Right cardiac atrium (tissue), 5 donors: ENCODE measurements at regions of chr1 and their contacts with region 1.

Region 1: GRCh38 chr1:114100148-114100547 is 53.5 kb downstream of the SYT6 start:
- DNase-seq: no peak
- ATAC-seq: no peak
- H3K4me3 ChIP-seq: no peak overlapping the region
- H3K27ac ChIP-seq: no peak overlapping the region
- H3K4me1 ChIP-seq: no peaks in the 10 kb centered on the region
- H3K27me3 ChIP-seq: no peaks in the 10 kb centered on the region

Region 2: GRCh38 chr1:114124644-114125043 is 24.5 kb after region 1 on chr1:
- intact Hi-C with region 1: loop called in 1 of 4 experiments (anchors 2 kb)
- DNase-seq: no peak
- ATAC-seq: no peak
- H3K4me3 ChIP-seq: no peak overlapping the region
- H3K27ac ChIP-seq: no peak overlapping the region
- H3K4me1 ChIP-seq: no peaks in the 10 kb centered on the region
- H3K27me3 ChIP-seq: no peaks in the 10 kb centered on the region